Caco-2 (cell line): ENCODE measurements at regions of chr3 and their contacts with region 1.

Region 1: DNA sequence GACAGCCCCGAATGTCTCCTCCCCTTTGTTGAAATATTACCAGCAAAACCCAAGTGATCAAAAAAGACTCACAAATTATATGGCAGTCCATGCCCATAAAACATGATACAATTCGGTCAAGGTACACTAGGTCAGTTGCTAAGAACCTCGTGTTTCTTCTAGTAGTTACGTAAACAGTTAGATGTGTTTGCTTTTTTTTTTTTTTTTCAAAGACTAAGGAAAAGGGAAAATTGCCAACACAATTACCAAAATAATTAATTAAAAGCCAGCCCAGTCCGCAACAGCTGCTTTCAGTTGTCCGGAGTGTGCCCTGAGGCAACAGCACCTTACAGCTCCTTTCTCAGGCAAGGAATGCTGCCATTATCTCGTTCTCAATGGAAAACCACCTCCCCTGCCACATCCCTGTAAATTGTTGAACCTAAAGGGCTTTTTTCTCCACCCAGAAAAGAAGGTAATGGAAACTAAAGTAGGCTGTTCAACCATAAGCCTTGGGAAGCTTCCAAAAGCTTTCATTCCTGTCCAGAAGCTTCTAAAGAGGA is 129.2 kb upstream of the TSC22D2 start:
- DNase-seq: peak; percentile 50 to 53
- H3K4me3 ChIP-seq: no peak overlapping the region
- H3K4me3 Mint-ChIP-seq: no peak overlapping the region
- H3K27ac Mint-ChIP-seq: peak overlapping the region; percentile 53
- H3K4me1 ChIP-seq: peaks cover 28% of the 10 kb centered on the region
- H3K4me1 Mint-ChIP-seq: no peaks in the 10 kb centered on the region
- H3K27me3 ChIP-seq: no peaks in the 10 kb centered on the region
- H3K27me3 Mint-ChIP-seq: no peaks in the 10 kb centered on the region
- CTCF ChIP-seq: no peak

Region 2: GRCh38 chr3:150238998-150239619 is 39.8 kb before region 1 on chr3:
- CTCF ChIA-PET with region 1: no interaction called
- POLR2A ChIA-PET with region 1: no interaction called
- intact Hi-C with region 1: loop called (anchors 5 kb)
- DNase-seq: peak; percentile 54 to 64
- H3K4me3 ChIP-seq: no peak overlapping the region
- H3K4me3 Mint-ChIP-seq: no peak overlapping the region
- H3K27ac Mint-ChIP-seq: no peak overlapping the region
- H3K4me1 ChIP-seq: peaks cover 28% of the 10 kb centered on the region
- H3K4me1 Mint-ChIP-seq: peaks cover 26% of the 10 kb centered on the region
- H3K27me3 ChIP-seq: no peaks in the 10 kb centered on the region
- H3K27me3 Mint-ChIP-seq: no peaks in the 10 kb centered on the region
- CTCF ChIP-seq: peak; percentile 65 to 86